ENCODE measurements at regions of chr6 and their contacts with region 1.

Region 1: DNA sequence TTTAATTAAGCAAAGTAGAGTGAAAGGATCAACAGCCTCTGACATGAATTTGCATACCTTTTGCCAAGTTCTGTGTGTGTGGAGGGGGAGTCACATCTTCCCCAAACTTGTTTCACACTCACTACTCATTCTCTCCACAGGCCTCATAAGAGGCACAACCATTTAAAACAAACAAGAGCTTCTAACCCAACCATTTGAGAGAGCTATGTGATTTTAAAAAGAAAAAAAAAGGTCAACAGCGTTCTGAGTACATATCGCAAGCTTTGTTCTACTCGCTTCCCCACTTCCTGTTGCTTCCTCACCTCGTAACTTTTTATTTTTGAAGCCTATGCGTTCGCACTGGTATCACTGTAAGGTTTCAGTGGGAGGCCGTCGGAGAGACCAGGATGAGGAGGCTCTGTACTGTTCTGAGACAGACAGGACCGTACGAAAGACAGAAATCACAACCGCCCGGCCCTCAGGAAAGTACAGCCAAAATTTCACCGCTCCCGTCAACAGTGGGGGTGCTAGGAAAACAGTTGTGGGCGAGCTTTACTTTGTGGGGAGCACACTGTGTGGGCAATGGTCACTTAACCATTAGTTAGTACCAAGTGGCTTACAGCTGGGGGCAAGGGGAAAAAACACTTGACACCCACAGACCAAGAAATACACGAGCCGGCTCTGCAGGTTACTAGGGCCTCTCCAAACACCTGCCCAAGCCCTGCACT is 61.3 kb downstream of the TRERF1 start:
- DNase-seq: peak in 13 of 14 experiments; percentile 26 to 87 (median 48)
- ATAC-seq: peak; percentile 80
- H3K4me3 ChIP-seq: peak overlapping the region; percentile 35
- H3K4me3 Mint-ChIP-seq: peak overlapping the region; percentile 73
- H3K27ac ChIP-seq: peak overlapping the region; percentile 78 to 89
- H3K27ac Mint-ChIP-seq: peak overlapping the region; percentile 99
- H3K4me1 ChIP-seq: peaks cover 94% of the 10 kb centered on the region
- H3K4me1 Mint-ChIP-seq: peaks cover 98% of the 10 kb centered on the region
- H3K27me3 ChIP-seq: no peaks in the 10 kb centered on the region
- H3K27me3 Mint-ChIP-seq: no peaks in the 10 kb centered on the region
- CTCF ChIP-seq: no peak

Region 2: DNA sequence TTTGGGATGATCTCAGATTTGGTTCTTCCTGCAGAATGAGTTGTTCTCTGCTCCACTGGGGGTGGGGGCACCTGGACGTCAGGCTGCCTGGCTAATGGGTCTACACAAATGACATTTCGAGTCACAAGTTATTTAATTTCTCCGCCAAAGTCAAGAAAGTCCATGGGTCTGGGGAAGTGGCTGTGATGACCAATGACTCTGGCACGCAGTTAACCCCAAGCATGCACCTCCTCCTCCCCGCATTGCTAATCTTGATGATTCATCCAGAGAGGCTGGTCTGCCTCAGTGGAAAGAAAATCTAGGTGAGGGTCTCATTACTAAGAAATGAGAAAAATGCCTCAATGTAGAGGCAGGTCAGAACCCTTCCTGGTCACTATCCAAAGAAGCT is 74.4 kb before region 1 on chr6:
- CTCF ChIA-PET with region 1: no interaction called
- POLR2A ChIA-PET with region 1: interaction called, 11 read pairs
- intact Hi-C with region 1: no loop called
- DNase-seq: peak in 2 of 14 experiments; percentile 55 to 70
- ATAC-seq: no peak
- H3K4me3 ChIP-seq: no peak overlapping the region
- H3K4me3 Mint-ChIP-seq: no peak overlapping the region
- H3K27ac ChIP-seq: no peak overlapping the region
- H3K27ac Mint-ChIP-seq: peak overlapping the region; percentile 75
- H3K4me1 ChIP-seq: peaks cover 37% of the 10 kb centered on the region
- H3K4me1 Mint-ChIP-seq: peaks cover 60% of the 10 kb centered on the region
- H3K27me3 ChIP-seq: no peaks in the 10 kb centered on the region
- H3K27me3 Mint-ChIP-seq: no peaks in the 10 kb centered on the region
- CTCF ChIP-seq: no peak

Region 3: GRCh38 chr6:42374018-42374659 is 16.2 kb before region 1 on chr6:
- CTCF ChIA-PET with region 1: interaction called, 6 read pairs
- POLR2A ChIA-PET with region 1: interaction called, 60 read pairs
- intact Hi-C with region 1: no loop called
- DNase-seq: peak in 2 of 14 experiments; percentile 42 to 64
- ATAC-seq: peak; percentile 67
- H3K4me3 ChIP-seq: no peak overlapping the region
- H3K4me3 Mint-ChIP-seq: peak overlapping the region; percentile 55
- H3K27ac ChIP-seq: peak overlapping the region in 1 of 2 donors; percentile 3
- H3K27ac Mint-ChIP-seq: peak overlapping the region; percentile 93
- H3K4me1 ChIP-seq: peaks cover 61% of the 10 kb centered on the region
- H3K4me1 Mint-ChIP-seq: peaks cover 67% of the 10 kb centered on the region
- H3K27me3 ChIP-seq: no peaks in the 10 kb centered on the region
- H3K27me3 Mint-ChIP-seq: no peaks in the 10 kb centered on the region
- CTCF ChIP-seq: no peak

Region 4: DNA sequence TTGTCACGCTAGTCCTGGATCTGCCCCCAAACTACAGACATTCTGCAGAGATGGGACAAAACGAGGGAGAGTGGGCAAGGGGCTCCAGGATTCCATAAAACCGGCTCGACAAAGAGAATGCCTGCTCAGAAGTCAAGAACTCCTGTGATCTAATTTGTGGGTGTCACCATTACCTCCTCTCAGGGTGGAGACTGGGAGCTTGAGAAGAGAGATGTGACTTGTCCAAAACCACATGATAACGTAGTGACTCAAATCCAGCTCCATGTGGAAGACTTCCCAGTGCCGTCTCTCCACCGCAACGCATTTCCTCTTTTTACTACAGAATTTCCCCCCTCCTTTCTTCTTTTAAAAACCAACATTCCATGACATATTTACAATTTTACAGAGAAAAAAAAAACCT is 17.0 kb after region 1 on chr6:
- CTCF ChIA-PET with region 1: interaction called, 4 read pairs
- POLR2A ChIA-PET with region 1: interaction called, 55 read pairs
- intact Hi-C with region 1: no loop called
- DNase-seq: peak in 2 of 14 experiments; percentile 56 to 63
- ATAC-seq: no peak
- H3K4me3 ChIP-seq: no peak overlapping the region
- H3K4me3 Mint-ChIP-seq: peak overlapping the region; percentile 40
- H3K27ac ChIP-seq: peak overlapping the region in 1 of 2 donors; percentile 7
- H3K27ac Mint-ChIP-seq: peak overlapping the region; percentile 75
- H3K4me1 ChIP-seq: peaks cover 48% of the 10 kb centered on the region
- H3K4me1 Mint-ChIP-seq: peaks cover 78% of the 10 kb centered on the region
- H3K27me3 ChIP-seq: no peaks in the 10 kb centered on the region
- H3K27me3 Mint-ChIP-seq: no peaks in the 10 kb centered on the region
- CTCF ChIP-seq: no peak

Region 5: GRCh38 chr6:42423244-42423643 is 32.9 kb after region 1 on chr6:
- CTCF ChIA-PET with region 1: no interaction called
- POLR2A ChIA-PET with region 1: interaction called, 21 read pairs
- intact Hi-C with region 1: loop called in 1 of 2 experiments (anchors 1 kb)
- DNase-seq: peak in 1 of 14 experiments; percentile 30
- ATAC-seq: peak; percentile 52
- H3K4me3 ChIP-seq: peak overlapping the region; percentile 43
- H3K4me3 Mint-ChIP-seq: peak overlapping the region; percentile 88
- H3K27ac ChIP-seq: peak overlapping the region in 1 of 2 donors; percentile 17
- H3K27ac Mint-ChIP-seq: peak overlapping the region; percentile 76
- H3K4me1 ChIP-seq: peaks cover 51% of the 10 kb centered on the region
- H3K4me1 Mint-ChIP-seq: peaks cover 76% of the 10 kb centered on the region
- H3K27me3 ChIP-seq: no peaks in the 10 kb centered on the region
- H3K27me3 Mint-ChIP-seq: no peaks in the 10 kb centered on the region
- CTCF ChIP-seq: no peak

Region 6: GRCh38 chr6:42440778-42441696 is 50.7 kb after region 1 on chr6:
- CTCF ChIA-PET with region 1: interaction called, 4 read pairs
- POLR2A ChIA-PET with region 1: interaction called, 16 read pairs
- intact Hi-C with region 1: no loop called
- DNase-seq: peak in 3 of 14 experiments; percentile 30 to 44 (median 39)
- ATAC-seq: peak; percentile 48
- H3K4me3 ChIP-seq: peak overlapping the region; percentile 1
- H3K4me3 Mint-ChIP-seq: peak overlapping the region; percentile 71
- H3K27ac ChIP-seq: peak overlapping the region in 1 of 2 donors; percentile 4
- H3K27ac Mint-ChIP-seq: peak overlapping the region; percentile 84
- H3K4me1 ChIP-seq: peaks cover 58% of the 10 kb centered on the region
- H3K4me1 Mint-ChIP-seq: peaks cover 84% of the 10 kb centered on the region
- H3K27me3 ChIP-seq: no peaks in the 10 kb centered on the region
- H3K27me3 Mint-ChIP-seq: no peaks in the 10 kb centered on the region
- CTCF ChIP-seq: no peak

Region 7: GRCh38 chr6:42453031-42453653 is 62.8 kb after region 1 on chr6:
- CTCF ChIA-PET with region 1: interaction called, 3 read pairs
- POLR2A ChIA-PET with region 1: interaction called, 178 read pairs
- intact Hi-C with region 1: loop called (anchors 2 to 5 kb)
- DNase-seq: peak; percentile 57 to 90 (median 75)
- ATAC-seq: peak; percentile 72
- H3K4me3 ChIP-seq: peak overlapping the region; percentile 96
- H3K4me3 Mint-ChIP-seq: peak overlapping the region; percentile 98
- H3K27ac ChIP-seq: peak overlapping the region in 1 of 2 donors; percentile 64
- H3K27ac Mint-ChIP-seq: peak overlapping the region; percentile 86
- H3K4me1 ChIP-seq: peaks cover 36% of the 10 kb centered on the region
- H3K4me1 Mint-ChIP-seq: peaks cover 51% of the 10 kb centered on the region
- H3K27me3 ChIP-seq: no peaks in the 10 kb centered on the region
- H3K27me3 Mint-ChIP-seq: no peaks in the 10 kb centered on the region
- CTCF ChIP-seq: no peak

Region 8: DNA sequence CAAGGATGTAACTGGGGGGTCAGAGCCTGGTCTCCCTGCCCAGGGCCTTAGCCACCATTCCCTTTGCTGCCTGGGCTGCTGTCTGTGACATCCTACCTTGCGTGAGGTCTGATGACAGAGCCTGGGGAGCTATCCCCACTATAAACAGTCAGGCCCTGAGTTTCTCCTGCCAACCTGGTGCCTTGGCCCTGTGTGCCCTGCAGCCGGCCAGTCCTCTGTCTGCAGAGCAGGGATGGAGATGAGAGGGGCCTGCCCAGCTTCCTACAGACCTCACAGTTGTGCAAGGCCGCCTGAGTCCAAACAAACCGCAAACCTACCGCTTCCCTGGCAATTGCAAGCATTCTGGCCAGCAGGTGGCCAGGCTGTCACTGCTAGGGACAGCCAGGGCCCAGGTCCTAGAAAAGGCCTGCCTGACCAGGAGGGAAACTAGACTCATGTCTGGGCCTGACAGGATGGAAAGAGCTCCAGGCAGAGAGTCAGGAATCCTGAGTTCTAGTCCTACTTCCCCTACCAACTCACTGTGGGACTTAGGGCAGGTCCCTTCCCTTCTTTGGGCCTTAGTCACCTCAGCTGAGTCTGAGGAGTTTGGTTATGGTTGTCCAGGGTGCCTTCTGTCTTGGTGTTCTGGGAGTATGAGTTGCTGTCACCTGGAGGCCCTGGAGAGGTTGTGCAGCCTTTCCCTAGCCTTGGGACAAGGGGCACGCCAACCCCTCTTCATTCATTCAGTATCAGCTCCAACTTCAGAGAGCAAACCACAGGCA is 1465.8 kb after region 1 on chr6:
- CTCF ChIA-PET with region 1: no interaction called
- POLR2A ChIA-PET with region 1: no interaction called
- intact Hi-C with region 1: no loop called
- DNase-seq: no peak
- ATAC-seq: no peak
- H3K4me3 ChIP-seq: no peak overlapping the region
- H3K4me3 Mint-ChIP-seq: no peak overlapping the region
- H3K27ac ChIP-seq: no peak overlapping the region
- H3K27ac Mint-ChIP-seq: no peak overlapping the region
- H3K4me1 ChIP-seq: no peaks in the 10 kb centered on the region
- H3K4me1 Mint-ChIP-seq: no peaks in the 10 kb centered on the region
- H3K27me3 ChIP-seq: no peaks in the 10 kb centered on the region
- H3K27me3 Mint-ChIP-seq: no peaks in the 10 kb centered on the region
- CTCF ChIP-seq: no peak

Measured in CD4-positive, alpha-beta T cell (primary cell).